SK-N-SH (cell line): ENCODE measurements at regions of chr14 and their contacts with region 1.

Region 1: GRCh38 chr14:24710403-24711112 is 76.6 kb upstream of the GZMB start:
- DNase-seq: peak; percentile 45
- H3K4me3 ChIP-seq: peak overlapping the region; percentile 38 to 55; a peak in 3 of 4 replicates
- H3K27ac ChIP-seq: no peak overlapping the region
- H3K4me1 ChIP-seq: peaks cover 0 to 3% of the 10 kb centered on the region in 2 experiments; a peak in 1 of 4 replicates
- H3K27me3 ChIP-seq: peaks cover 28% of the 10 kb centered on the region; the same call in 1 of the 2 replicates
- CTCF ChIP-seq: peak; percentile 93
- EP300 ChIP-seq: no peak
- RAD21 ChIP-seq: peak; percentile 62

Region 2: GRCh38 chr14:24678801-24679247 is 31.7 kb before region 1 on chr14:
- CTCF ChIA-PET with region 1: interaction called, 10 read pairs
- POLR2A ChIA-PET with region 1: no interaction called
- DNase-seq: peak; percentile 70
- H3K4me3 ChIP-seq: peak overlapping the region; percentile 32 to 66; a peak in 3 of 4 replicates
- H3K27ac ChIP-seq: no peak overlapping the region
- H3K4me1 ChIP-seq: no peaks in the 10 kb centered on the region
- H3K27me3 ChIP-seq: peaks cover 7% of the 10 kb centered on the region; the same call in 1 of the 2 replicates
- CTCF ChIP-seq: peak; percentile 99
- EP300 ChIP-seq: no peak
- RAD21 ChIP-seq: peak; percentile 48

Region 3: GRCh38 chr14:24699052-24699451 is 11.5 kb before region 1 on chr14:
- CTCF ChIA-PET with region 1: interaction called, 19 read pairs
- POLR2A ChIA-PET with region 1: no interaction called
- DNase-seq: no peak
- H3K4me3 ChIP-seq: no peak overlapping the region
- H3K27ac ChIP-seq: no peak overlapping the region
- H3K4me1 ChIP-seq: no peaks in the 10 kb centered on the region
- H3K27me3 ChIP-seq: no peaks in the 10 kb centered on the region
- CTCF ChIP-seq: no peak
- EP300 ChIP-seq: no peak
- RAD21 ChIP-seq: no peak

Region 4: DNA sequence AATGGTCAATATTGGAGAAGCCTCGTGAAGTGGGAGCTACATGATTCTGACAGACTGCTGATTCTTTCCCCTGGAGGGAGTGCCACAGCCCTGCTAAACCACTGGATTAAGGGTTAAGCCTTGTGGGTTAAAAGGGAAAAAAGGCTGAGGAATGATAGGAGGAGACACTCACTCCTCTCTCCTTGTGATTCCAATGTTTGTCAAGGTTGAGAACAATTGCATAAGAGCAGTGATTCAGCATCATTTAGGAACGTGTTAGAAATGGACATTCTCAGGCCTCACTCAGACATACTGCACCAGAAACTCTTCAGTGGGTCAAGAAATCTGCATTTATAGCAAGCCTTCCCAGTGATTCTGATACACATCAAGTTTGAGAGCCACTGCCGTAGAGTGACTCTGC is 11.2 kb after region 1 on chr14:
- CTCF ChIA-PET with region 1: interaction called, 59 read pairs
- POLR2A ChIA-PET with region 1: no interaction called
- DNase-seq: no peak
- H3K4me3 ChIP-seq: no peak overlapping the region
- H3K27ac ChIP-seq: no peak overlapping the region
- H3K4me1 ChIP-seq: no peaks in the 10 kb centered on the region
- H3K27me3 ChIP-seq: no peaks in the 10 kb centered on the region
- CTCF ChIP-seq: no peak
- EP300 ChIP-seq: no peak
- RAD21 ChIP-seq: no peak

Region 5: DNA sequence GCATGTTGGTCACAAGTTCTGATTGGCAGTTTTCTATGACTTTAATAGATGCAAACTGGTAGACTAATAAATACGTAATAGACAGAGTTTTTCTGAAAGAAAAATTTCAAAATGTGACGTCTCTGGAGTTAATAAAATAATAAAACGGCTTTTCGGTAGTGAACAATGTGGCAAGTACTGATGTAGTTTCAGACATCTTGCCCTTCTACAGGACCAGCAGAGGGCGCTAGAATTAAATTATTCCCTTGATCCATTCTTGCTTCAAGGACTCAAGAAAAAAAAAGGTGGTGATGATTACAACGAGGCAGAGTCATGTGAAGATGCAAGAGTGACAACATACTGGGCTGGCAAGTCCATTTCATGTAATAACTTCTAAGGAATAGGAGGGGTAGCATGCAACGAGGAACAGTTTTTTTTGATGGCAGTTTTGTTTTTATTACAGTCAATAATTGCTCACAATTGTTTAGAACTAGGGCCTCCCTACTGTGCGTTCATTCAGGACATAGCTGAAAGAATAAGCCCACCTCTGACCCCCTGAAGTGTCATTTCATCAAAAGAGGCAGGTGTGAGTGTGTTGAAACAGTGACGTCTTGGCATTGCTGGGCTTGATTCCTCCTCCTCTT is 24.4 kb after region 1 on chr14:
- CTCF ChIA-PET with region 1: interaction called, 39 read pairs
- POLR2A ChIA-PET with region 1: interaction called, 6 read pairs
- DNase-seq: peak; percentile 14
- H3K4me3 ChIP-seq: no peak overlapping the region; a peak in 1 of 4 replicates
- H3K27ac ChIP-seq: no peak overlapping the region
- H3K4me1 ChIP-seq: no peaks in the 10 kb centered on the region
- H3K27me3 ChIP-seq: no peaks in the 10 kb centered on the region
- CTCF ChIP-seq: peak; percentile 84
- EP300 ChIP-seq: no peak
- RAD21 ChIP-seq: peak; percentile 50